ENCODE measurements at regions of chr18 and their contacts with region 1.

Region 1: GRCh38 chr18:24488824-24489493 is 28.5 kb downstream of the HRH4 start:
- DNase-seq: no peak
- ATAC-seq: peak in 2 of 4 donors; percentile 35 to 67
- H3K4me3 ChIP-seq: no peak overlapping the region
- H3K27ac ChIP-seq: no peak overlapping the region
- H3K4me1 ChIP-seq: no peaks in the 10 kb centered on the region
- H3K27me3 ChIP-seq: no peaks in the 10 kb centered on the region
- CTCF ChIP-seq: peak; percentile 84

Region 2: GRCh38 chr18:24176727-24177416 is 312.1 kb before region 1 on chr18:
- intact Hi-C with region 1: loop called in 1 of 2 experiments (anchors 10 kb)
- DNase-seq: peak; percentile 50 to 63
- ATAC-seq: peak; percentile 71 to 82 (median 78)
- H3K4me3 ChIP-seq: no peak overlapping the region
- H3K27ac ChIP-seq: no peak overlapping the region
- H3K4me1 ChIP-seq: peaks cover 12% of the 10 kb centered on the region
- H3K27me3 ChIP-seq: no peaks in the 10 kb centered on the region
- CTCF ChIP-seq: peak; percentile 79

Region 3: GRCh38 chr18:24362758-24363157 is 126.2 kb before region 1 on chr18:
- intact Hi-C with region 1: loop called (anchors 2 to 5 kb)
- DNase-seq: no peak
- ATAC-seq: no peak
- H3K4me3 ChIP-seq: no peak overlapping the region
- H3K27ac ChIP-seq: no peak overlapping the region
- H3K4me1 ChIP-seq: no peaks in the 10 kb centered on the region
- H3K27me3 ChIP-seq: no peaks in the 10 kb centered on the region
- CTCF ChIP-seq: no peak

Region 4: GRCh38 chr18:24726727-24727492 is 238.0 kb after region 1 on chr18:
- intact Hi-C with region 1: loop called (anchors 5 to 10 kb)
- DNase-seq: peak; percentile 59 to 74
- ATAC-seq: peak; percentile 42 to 84 (median 54)
- H3K4me3 ChIP-seq: peak overlapping the region; percentile 60
- H3K27ac ChIP-seq: no peak overlapping the region
- H3K4me1 ChIP-seq: peaks cover 13% of the 10 kb centered on the region
- H3K27me3 ChIP-seq: peaks cover 0 to 12% (median 0%) of the 10 kb centered on the region in 3 donors
- CTCF ChIP-seq: peak; percentile 79

Measured in psoas muscle (tissue), 8 donors.